K562 (cell line): ENCODE measurements at regions of chr1 and their contacts with region 1.

Region 1: GRCh38 chr1:221356693-221357092 is 385.2 kb downstream of the DUSP10 start:
- DNase-seq: peak in 1 of 4 experiments; percentile 1
- ATAC-seq: no peak
- H3K4me3 ChIP-seq: no peak overlapping the region
- H3K27ac ChIP-seq: no peak overlapping the region
- H3K4me1 ChIP-seq: no peaks in the 10 kb centered on the region
- H3K27me3 ChIP-seq: no peaks in the 10 kb centered on the region
- CTCF ChIP-seq: 0 out of 6 replicates have a peak, but pooled peaks of 1 of the 3 experiments have one; percentile 4
- EP300 ChIP-seq: no peak
- POLR2A ChIP-seq: no peak
- RAD21 ChIP-seq: no peak

Region 2: DNA sequence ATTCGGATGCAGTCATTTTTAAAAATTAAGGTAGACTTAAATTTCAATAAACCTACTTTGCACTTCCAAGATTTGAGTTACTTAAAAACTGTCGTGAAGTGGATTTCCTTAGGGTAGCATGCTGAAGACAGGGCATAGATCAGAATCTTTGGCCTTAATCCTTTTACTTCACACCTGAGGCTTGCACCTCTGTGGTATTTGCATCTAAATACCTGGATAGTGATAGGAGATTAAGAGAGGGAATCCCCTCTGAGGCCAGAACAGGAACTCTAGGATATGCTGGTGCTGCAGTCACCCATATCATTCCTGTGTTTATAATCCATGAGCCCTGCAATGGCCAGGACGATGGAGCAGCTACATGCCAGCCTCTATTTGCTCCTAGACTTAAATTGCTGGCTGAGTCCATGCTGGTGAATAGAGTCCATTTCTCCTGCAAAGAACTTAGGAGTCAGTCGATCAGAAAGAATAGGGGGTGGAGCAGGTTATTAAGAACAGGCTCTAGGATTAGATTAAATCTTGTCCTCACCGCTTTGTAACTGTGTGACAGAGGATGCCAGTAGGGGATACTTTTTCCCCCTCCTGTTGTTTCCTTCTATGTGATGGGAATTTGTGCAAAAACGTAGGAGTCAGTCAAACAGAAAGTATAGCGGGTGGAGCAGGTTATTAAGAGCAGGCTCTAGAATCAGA is 51.6 kb after region 1 on chr1:
- CTCF ChIA-PET with region 1: no interaction called
- POLR2A ChIA-PET with region 1: no interaction called
- in situ Hi-C with region 1: no loop called
- intact Hi-C with region 1: loop called (anchors 5 kb)
- DNase-seq: no peak
- ATAC-seq: no peak
- H3K4me3 ChIP-seq: no peak overlapping the region
- H3K27ac ChIP-seq: no peak overlapping the region
- H3K4me1 ChIP-seq: no peaks in the 10 kb centered on the region
- H3K27me3 ChIP-seq: no peaks in the 10 kb centered on the region
- CTCF ChIP-seq: no peak
- EP300 ChIP-seq: no peak
- POLR2A ChIP-seq: no peak
- RAD21 ChIP-seq: no peak